Activated B cell treated with CpG ODN at 0.5 μM for 24 hours (primary cell): ENCODE measurements at regions of chr21 and their contacts with region 1.

Region 1: GRCh38 chr21:37642493-37642892 is 273.8 kb downstream of the KCNJ6 start:
- DNase-seq: no peak
- ATAC-seq: no peak
- H3K4me3 Mint-ChIP-seq: no peak overlapping the region
- H3K27ac Mint-ChIP-seq: no peak overlapping the region
- H3K4me1 Mint-ChIP-seq: peaks cover 7% of the 10 kb centered on the region
- H3K27me3 Mint-ChIP-seq: peaks cover 33% of the 10 kb centered on the region
- CTCF ChIP-seq: no peak

Region 2: DNA sequence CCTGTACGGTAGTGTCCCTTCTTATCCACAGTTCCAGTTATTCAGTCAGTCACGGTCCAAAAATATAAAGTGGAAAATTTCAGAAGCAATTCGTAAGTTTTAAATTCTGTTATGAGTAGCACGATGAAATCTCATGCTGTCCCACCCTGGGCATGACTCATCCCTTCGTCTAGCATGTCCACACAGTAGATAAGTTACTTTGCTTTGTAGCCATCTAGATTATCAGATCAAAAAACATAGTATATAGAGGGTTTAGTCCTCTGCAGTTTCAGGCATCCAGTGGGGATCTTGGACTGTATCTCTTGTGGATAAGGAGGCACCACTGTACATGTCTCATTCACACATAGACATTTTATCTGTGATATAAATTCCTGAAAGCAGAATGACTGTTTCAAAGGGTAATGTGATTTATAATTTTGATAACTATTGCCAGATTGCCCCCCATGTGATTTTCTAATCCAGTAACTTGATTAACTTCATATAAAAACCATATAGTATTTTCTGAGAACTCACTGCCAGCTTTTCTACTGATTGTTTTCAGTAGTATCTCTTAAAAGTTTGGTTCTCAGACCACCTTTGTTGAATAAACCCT is 132.6 kb before region 1 on chr21:
- CTCF ChIA-PET with region 1: no interaction called
- POLR2A ChIA-PET with region 1: no interaction called
- intact Hi-C with region 1: loop called (anchors 10 kb)
- DNase-seq: no peak
- ATAC-seq: no peak
- H3K4me3 Mint-ChIP-seq: no peak overlapping the region
- H3K27ac Mint-ChIP-seq: no peak overlapping the region
- H3K4me1 Mint-ChIP-seq: peaks cover 12% of the 10 kb centered on the region
- H3K27me3 Mint-ChIP-seq: no peaks in the 10 kb centered on the region
- CTCF ChIP-seq: no peak

Region 3: DNA sequence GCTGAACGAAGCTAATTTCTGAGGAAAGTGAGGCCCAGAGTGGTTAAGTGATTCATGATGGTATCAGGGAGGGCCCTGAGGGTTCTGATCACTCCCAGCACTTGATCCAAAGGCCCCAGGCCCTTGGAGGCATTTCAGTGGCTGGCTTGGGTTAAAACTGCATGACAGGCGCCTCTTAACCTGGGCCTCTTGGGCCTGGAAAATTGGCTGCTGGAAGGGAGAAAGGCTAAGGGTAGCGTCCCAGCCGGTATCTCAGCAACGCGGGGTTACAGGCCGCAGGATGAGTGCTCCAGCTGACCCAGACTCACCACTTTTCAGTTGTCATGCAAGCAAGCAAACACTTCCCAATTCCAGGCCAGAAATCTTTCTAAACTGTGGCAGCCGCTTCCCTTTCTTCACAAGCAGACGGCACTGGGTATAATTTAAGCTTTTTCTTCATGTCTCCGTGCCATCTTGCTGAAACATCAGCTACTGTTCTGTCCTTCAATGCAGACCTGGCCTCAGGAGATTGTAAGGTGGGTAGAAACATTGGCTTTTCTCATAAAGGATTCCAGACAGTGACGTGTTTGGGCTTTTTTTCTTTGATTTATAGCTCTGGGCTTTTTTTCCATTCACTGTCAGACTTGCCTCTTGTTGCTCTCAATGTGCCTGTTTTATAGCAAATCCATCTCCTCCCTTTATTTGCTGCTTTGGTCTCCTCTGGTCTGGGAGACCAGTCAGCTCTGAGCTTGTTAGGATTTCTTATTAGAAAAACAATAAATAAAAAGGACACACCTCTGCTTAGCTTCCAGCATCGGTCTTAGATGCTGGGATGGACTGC is 44.7 kb after region 1 on chr21:
- CTCF ChIA-PET with region 1: no interaction called
- POLR2A ChIA-PET with region 1: no interaction called
- intact Hi-C with region 1: no loop called
- DNase-seq: no peak
- ATAC-seq: no peak
- H3K4me3 Mint-ChIP-seq: no peak overlapping the region
- H3K27ac Mint-ChIP-seq: no peak overlapping the region
- H3K4me1 Mint-ChIP-seq: peaks cover 7% of the 10 kb centered on the region
- H3K27me3 Mint-ChIP-seq: peaks cover 7% of the 10 kb centered on the region
- CTCF ChIP-seq: no peak